ENCODE measurements at regions of chr1 and their contacts with region 1.

Region 1: GRCh38 chr1:206544562-206545257 is 37.4 kb downstream of the RASSF5 start:
- DNase-seq: peak; percentile 88
- H3K4me3 Mint-ChIP-seq: no peak overlapping the region
- H3K27ac Mint-ChIP-seq: peak overlapping the region; percentile 42
- H3K4me1 Mint-ChIP-seq: peaks cover 17% of the 10 kb centered on the region
- H3K27me3 Mint-ChIP-seq: no peaks in the 10 kb centered on the region

Region 2: GRCh38 chr1:206469933-206470691 is 74.6 kb before region 1 on chr1 and contains the start of gene IKBKE:
- CTCF ChIA-PET with region 1: interaction called, 10 read pairs
- POLR2A ChIA-PET with region 1: no interaction called
- intact Hi-C with region 1: no loop called
- DNase-seq: peak; percentile 74
- H3K4me3 Mint-ChIP-seq: peak within 1 kb of the TSS; percentile 85
- H3K27ac Mint-ChIP-seq: peak within 1 kb of the TSS; percentile 90
- H3K4me1 Mint-ChIP-seq: peaks cover 87% of the 10 kb centered on the region
- H3K27me3 Mint-ChIP-seq: no peaks in the 10 kb centered on the region
- total RNA-seq, gene IKBKE: 18.4 to 19.4 TPM

Region 3: GRCh38 chr1:206496131-206496793 is 48.4 kb before region 1 on chr1:
- CTCF ChIA-PET with region 1: interaction called, 36 read pairs
- POLR2A ChIA-PET with region 1: no interaction called
- intact Hi-C with region 1: no loop called
- DNase-seq: no peak
- H3K4me3 Mint-ChIP-seq: no peak overlapping the region
- H3K27ac Mint-ChIP-seq: peak overlapping the region; percentile 67
- H3K4me1 Mint-ChIP-seq: peaks cover 8% of the 10 kb centered on the region
- H3K27me3 Mint-ChIP-seq: no peaks in the 10 kb centered on the region

Region 4: GRCh38 chr1:206556750-206557635 is 12.3 kb after region 1 on chr1:
- CTCF ChIA-PET with region 1: interaction called, 114 read pairs
- POLR2A ChIA-PET with region 1: interaction called, 20 read pairs
- intact Hi-C with region 1: loop called (anchors 1 kb)
- DNase-seq: peak; percentile 94
- H3K4me3 Mint-ChIP-seq: peak overlapping the region; percentile 97
- H3K27ac Mint-ChIP-seq: peak overlapping the region; percentile 99
- H3K4me1 Mint-ChIP-seq: peaks cover 66% of the 10 kb centered on the region
- H3K27me3 Mint-ChIP-seq: no peaks in the 10 kb centered on the region

Region 5: GRCh38 chr1:206563367-206564207 is 18.9 kb after region 1 on chr1:
- CTCF ChIA-PET with region 1: interaction called, 114 read pairs
- POLR2A ChIA-PET with region 1: interaction called, 7 read pairs
- intact Hi-C with region 1: no loop called
- DNase-seq: no peak
- H3K4me3 Mint-ChIP-seq: peak overlapping the region; percentile 72
- H3K27ac Mint-ChIP-seq: peak overlapping the region; percentile 99
- H3K4me1 Mint-ChIP-seq: peaks cover 86% of the 10 kb centered on the region
- H3K27me3 Mint-ChIP-seq: no peaks in the 10 kb centered on the region

Region 6: GRCh38 chr1:206575165-206575893 is 30.6 kb after region 1 on chr1:
- CTCF ChIA-PET with region 1: interaction called, 588 read pairs
- POLR2A ChIA-PET with region 1: interaction called, 13 read pairs
- intact Hi-C with region 1: no loop called
- DNase-seq: peak; percentile 67
- H3K4me3 Mint-ChIP-seq: peak overlapping the region; percentile 59
- H3K27ac Mint-ChIP-seq: peak overlapping the region; percentile 99
- H3K4me1 Mint-ChIP-seq: peaks cover 97% of the 10 kb centered on the region
- H3K27me3 Mint-ChIP-seq: no peaks in the 10 kb centered on the region

Measured in activated CD4-positive, alpha-beta memory T cell treated with anti-CD3 and anti-CD28 coated beads for 36 hours (primary cell).